HCT116 (cell line): ENCODE measurements at regions of chr22 and their contacts with region 1.

Region 1: GRCh38 chr22:40679964-40680818 is 907 bp downstream of the MCHR1 start:
- DNase-seq: no peak
- ATAC-seq: no peak
- H3K4me3 ChIP-seq: no peak overlapping the region
- H3K27ac ChIP-seq: no peak overlapping the region
- H3K4me1 ChIP-seq: peaks cover 0 to 11% of the 10 kb centered on the region in 2 experiments; a peak in 3 of 4 replicates
- H3K27me3 ChIP-seq: peaks cover 12% of the 10 kb centered on the region; the same call in 1 of the 2 replicates
- CTCF ChIP-seq: peak in 1 of 3 experiments; percentile 26; a peak in 1 of 6 replicates
- POLR2A ChIP-seq: no peak
- RAD21 ChIP-seq: no peak

Region 2: DNA sequence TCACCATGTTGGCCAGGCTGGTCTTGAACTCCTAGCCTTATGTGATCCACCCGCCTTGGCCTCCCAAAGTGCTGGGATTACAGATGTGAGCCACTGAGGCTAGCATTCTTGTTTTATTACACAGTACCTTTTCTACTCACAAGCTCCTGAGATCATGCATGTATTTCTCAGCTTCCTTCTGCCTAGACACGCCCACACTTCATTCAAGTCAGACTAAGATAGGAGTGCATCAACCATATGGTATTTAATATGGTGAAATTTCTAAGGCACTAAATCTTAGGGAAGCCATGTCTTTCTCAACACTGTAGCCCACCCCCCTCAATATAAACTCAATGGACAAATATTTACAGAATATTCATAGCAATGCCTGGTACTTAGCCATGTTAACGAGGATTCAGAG is 76.9 kb after region 1 on chr22:
- CTCF ChIA-PET with region 1: interaction called, 67 read pairs
- POLR2A ChIA-PET with region 1: no interaction called
- RAD21 ChIA-PET with region 1: interaction called, 8 to 10 read pairs
- intact Hi-C with region 1: loop called (anchors 1 kb)
- DNase-seq: no peak
- ATAC-seq: no peak
- H3K4me3 ChIP-seq: no peak overlapping the region
- H3K27ac ChIP-seq: no peak overlapping the region
- H3K4me1 ChIP-seq: peaks cover 0 to 2% of the 10 kb centered on the region in 2 experiments; a peak in 2 of 4 replicates
- H3K27me3 ChIP-seq: no peaks in the 10 kb centered on the region
- CTCF ChIP-seq: no peak
- POLR2A ChIP-seq: no peak
- RAD21 ChIP-seq: no peak

Region 3: DNA sequence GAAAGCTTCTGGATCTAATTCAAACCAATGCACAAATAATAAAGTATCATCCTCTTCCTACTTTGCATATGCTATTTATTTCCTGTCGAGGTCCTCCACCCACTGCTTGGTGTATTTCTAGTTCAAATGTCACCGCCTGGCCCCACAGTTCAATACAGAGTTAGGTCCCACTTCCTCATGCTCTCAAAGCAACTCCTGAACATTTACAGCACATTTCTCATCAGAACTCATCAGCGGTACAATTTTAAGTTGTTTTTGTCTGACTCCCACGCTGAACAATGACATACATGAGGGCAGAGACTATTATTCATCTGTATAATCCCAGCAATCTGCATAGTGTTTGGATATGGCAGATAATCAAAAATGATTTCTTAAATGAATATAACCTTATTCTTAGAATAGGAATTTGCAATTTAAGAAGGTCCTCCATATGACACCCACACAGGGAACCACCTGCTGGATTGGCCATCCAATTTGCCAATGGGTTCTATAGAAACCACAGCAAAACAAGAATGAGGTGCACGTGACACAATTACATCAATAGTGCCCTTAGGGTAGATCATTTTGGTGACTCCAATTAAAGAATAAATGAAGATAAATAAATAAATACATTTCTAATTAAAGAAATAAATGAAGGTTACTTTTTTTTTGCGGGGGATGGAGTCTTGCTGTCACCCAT is 84.7 kb after region 1 on chr22:
- CTCF ChIA-PET with region 1: interaction called, 67 read pairs
- POLR2A ChIA-PET with region 1: no interaction called
- RAD21 ChIA-PET with region 1: interaction called, 8 to 10 read pairs
- intact Hi-C with region 1: loop called (anchors 1 kb)
- DNase-seq: no peak
- ATAC-seq: no peak
- H3K4me3 ChIP-seq: no peak overlapping the region
- H3K27ac ChIP-seq: no peak overlapping the region
- H3K4me1 ChIP-seq: no peaks in the 10 kb centered on the region; a peak in 1 of 4 replicates
- H3K27me3 ChIP-seq: no peaks in the 10 kb centered on the region
- CTCF ChIP-seq: no peak
- POLR2A ChIP-seq: no peak
- RAD21 ChIP-seq: no peak

Region 4: DNA sequence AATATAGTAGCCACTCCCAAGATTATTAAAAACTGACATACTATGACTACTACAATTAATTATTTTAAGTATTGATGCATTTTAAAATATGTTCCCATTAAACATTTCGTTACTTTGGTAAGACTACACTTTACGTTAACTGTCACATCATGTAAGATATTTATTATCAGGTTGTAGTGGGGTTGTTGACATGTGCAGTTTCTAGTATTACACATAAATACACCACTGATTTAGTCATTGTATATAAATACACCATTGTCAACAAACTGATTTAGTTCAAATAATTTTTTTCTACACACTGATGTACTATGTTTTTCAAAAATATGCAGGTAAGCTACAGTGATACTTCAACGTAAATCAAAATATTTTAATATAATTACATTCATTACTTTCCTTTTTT is 164.8 kb after region 1 on chr22:
- CTCF ChIA-PET with region 1: no interaction called
- POLR2A ChIA-PET with region 1: no interaction called
- RAD21 ChIA-PET with region 1: no interaction called
- intact Hi-C with region 1: no loop called
- DNase-seq: no peak
- ATAC-seq: no peak
- H3K4me3 ChIP-seq: no peak overlapping the region
- H3K27ac ChIP-seq: no peak overlapping the region
- H3K4me1 ChIP-seq: no peaks in the 10 kb centered on the region
- H3K27me3 ChIP-seq: no peaks in the 10 kb centered on the region
- CTCF ChIP-seq: no peak
- POLR2A ChIP-seq: no peak
- RAD21 ChIP-seq: no peak